Activated CD8-positive, alpha-beta T cell treated with anti-CD3 and anti-CD28 coated beads for 36 hours (primary cell): ENCODE measurements at regions of chr1 and their contacts with region 1.

Region 1: GRCh38 chr1:221777431-221778072 is 35.7 kb upstream of the DUSP10 start:
- DNase-seq: peak; percentile 82
- ATAC-seq: peak; percentile 67
- H3K4me3 Mint-ChIP-seq: peak overlapping the region; percentile 54
- H3K27ac Mint-ChIP-seq: peak overlapping the region; percentile 81
- H3K4me1 Mint-ChIP-seq: peaks cover 79% of the 10 kb centered on the region
- H3K27me3 Mint-ChIP-seq: no peaks in the 10 kb centered on the region
- CTCF ChIP-seq: peak; percentile 28

Region 2: DNA sequence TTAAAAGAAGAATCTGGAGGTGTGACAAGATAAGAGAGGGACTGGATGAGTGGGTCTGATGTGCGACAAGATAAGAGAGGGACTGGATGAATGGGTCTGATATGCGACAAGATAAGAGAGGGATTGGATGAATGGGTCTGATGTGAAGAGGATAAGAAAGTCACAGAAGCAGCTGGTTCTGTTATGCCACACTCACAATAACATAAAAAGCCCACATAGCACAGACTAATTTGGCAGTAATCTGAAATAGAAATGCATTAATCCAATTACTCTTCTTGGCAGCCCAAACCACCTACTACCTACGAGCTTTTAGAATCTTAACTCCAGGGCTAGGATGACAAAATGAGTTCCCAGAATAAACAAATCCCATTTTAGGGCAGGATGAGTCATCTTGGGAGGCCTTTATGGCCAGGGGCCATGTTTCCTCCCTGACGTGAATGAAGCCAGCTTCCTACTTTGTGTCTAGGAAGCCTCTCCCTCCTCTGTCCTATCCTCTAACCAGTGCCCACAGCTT is 165.2 kb before region 1 on chr1:
- CTCF ChIA-PET with region 1: no interaction called
- POLR2A ChIA-PET with region 1: no interaction called
- intact Hi-C with region 1: no loop called
- DNase-seq: no peak
- ATAC-seq: no peak
- H3K4me3 Mint-ChIP-seq: no peak overlapping the region
- H3K27ac Mint-ChIP-seq: no peak overlapping the region
- H3K4me1 Mint-ChIP-seq: no peaks in the 10 kb centered on the region
- H3K27me3 Mint-ChIP-seq: no peaks in the 10 kb centered on the region
- CTCF ChIP-seq: no peak

Region 3: DNA sequence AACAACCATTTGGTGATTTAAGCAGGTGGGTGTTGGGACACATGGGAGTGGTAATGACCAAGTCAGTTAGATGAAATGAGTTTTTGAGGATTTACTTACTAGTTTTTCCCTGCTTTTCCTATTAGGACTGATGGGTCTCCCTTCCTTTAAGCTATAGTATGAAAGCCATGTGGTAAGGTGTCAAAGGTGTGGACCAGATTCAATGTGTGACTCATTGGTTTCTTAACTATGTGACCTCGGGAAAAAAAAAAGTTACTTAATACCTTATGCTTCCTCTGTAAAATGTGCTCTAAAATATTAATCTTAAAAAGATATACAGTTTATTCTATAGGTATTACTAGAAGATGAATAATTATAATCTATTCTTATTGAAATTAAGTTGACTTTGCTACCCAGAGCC is 129.4 kb before region 1 on chr1:
- CTCF ChIA-PET with region 1: no interaction called
- POLR2A ChIA-PET with region 1: no interaction called
- intact Hi-C with region 1: no loop called
- DNase-seq: no peak
- ATAC-seq: no peak
- H3K4me3 Mint-ChIP-seq: no peak overlapping the region
- H3K27ac Mint-ChIP-seq: no peak overlapping the region
- H3K4me1 Mint-ChIP-seq: peaks cover 2% of the 10 kb centered on the region
- H3K27me3 Mint-ChIP-seq: peaks cover 3% of the 10 kb centered on the region
- CTCF ChIP-seq: no peak

Region 4: DNA sequence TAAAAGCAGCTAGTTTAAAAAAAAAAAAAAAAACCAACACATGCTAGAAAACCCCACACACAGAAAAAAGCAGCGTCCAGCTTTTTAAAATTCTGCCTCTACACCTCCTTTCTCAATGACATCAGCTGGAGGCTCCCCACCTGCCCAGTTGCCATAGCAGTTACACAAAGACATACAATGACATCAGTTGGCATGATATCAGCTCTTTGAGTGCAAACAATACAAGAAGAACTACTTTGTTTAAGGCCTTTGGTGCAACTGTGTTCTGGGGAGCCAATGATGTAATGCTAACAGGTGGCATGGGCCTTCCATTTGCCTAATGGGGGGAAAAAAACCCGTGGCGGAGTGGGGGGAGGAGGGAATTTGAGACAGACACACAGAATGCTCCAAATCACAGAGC is 68.6 kb before region 1 on chr1:
- CTCF ChIA-PET with region 1: interaction called, 4 read pairs
- POLR2A ChIA-PET with region 1: interaction called, 6 read pairs
- intact Hi-C with region 1: loop called (anchors 2 kb)
- DNase-seq: peak; percentile 61
- ATAC-seq: no peak
- H3K4me3 Mint-ChIP-seq: no peak overlapping the region
- H3K27ac Mint-ChIP-seq: peak overlapping the region; percentile 90
- H3K4me1 Mint-ChIP-seq: peaks cover 63% of the 10 kb centered on the region
- H3K27me3 Mint-ChIP-seq: no peaks in the 10 kb centered on the region
- CTCF ChIP-seq: no peak

Region 5: GRCh38 chr1:221753828-221754188 is 23.7 kb before region 1 on chr1:
- CTCF ChIA-PET with region 1: interaction called, 7 read pairs
- POLR2A ChIA-PET with region 1: interaction called, 7 read pairs
- intact Hi-C with region 1: loop called (anchors 1 kb)
- DNase-seq: no peak
- ATAC-seq: peak; percentile 43
- H3K4me3 Mint-ChIP-seq: no peak overlapping the region
- H3K27ac Mint-ChIP-seq: peak overlapping the region; percentile 88
- H3K4me1 Mint-ChIP-seq: peaks cover 52% of the 10 kb centered on the region
- H3K27me3 Mint-ChIP-seq: peaks cover 3% of the 10 kb centered on the region
- CTCF ChIP-seq: no peak

Region 6: GRCh38 chr1:221794079-221794670 is 16.6 kb after region 1 on chr1:
- CTCF ChIA-PET with region 1: interaction called, 4 read pairs
- POLR2A ChIA-PET with region 1: interaction called, 12 read pairs
- intact Hi-C with region 1: loop called (anchors 2 kb)
- DNase-seq: peak; percentile 71
- ATAC-seq: peak; percentile 89
- H3K4me3 Mint-ChIP-seq: peak overlapping the region; percentile 18
- H3K27ac Mint-ChIP-seq: peak overlapping the region; percentile 88
- H3K4me1 Mint-ChIP-seq: peaks cover 45% of the 10 kb centered on the region
- H3K27me3 Mint-ChIP-seq: no peaks in the 10 kb centered on the region
- CTCF ChIP-seq: no peak

Region 7: DNA sequence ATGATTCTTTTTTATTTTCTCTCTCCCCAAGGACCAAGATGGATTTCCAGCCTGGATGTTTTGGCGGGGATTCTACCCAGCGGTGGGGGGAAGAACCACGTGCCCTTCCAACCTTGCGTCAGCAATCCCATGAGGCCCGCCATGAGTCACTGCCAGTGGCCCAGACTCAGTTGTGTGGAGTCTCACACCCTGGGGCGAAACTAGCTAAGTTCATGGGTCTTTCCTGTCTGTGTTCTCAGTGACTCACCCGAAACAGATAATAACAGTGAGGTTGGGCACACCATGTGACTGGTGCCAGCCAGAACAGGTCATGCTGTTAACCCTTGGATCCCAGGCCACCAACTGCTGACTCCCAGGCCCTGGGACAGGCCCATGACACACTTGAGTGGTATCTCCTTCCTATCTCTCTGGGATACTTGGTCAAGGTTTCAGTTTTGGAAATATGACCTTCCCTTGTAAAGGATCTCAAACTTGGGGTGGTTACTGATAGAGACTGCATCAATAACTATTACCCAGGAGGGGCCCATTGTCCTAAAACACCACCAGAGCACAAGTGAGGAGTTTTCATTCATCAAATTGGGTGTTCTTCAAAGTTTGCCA is 62.3 kb after region 1 on chr1:
- CTCF ChIA-PET with region 1: interaction called, 3 read pairs
- POLR2A ChIA-PET with region 1: interaction called, 3 read pairs
- intact Hi-C with region 1: loop called (anchors 2 kb)
- DNase-seq: peak; percentile 90
- ATAC-seq: peak; percentile 96
- H3K4me3 Mint-ChIP-seq: no peak overlapping the region
- H3K27ac Mint-ChIP-seq: peak overlapping the region; percentile 80
- H3K4me1 Mint-ChIP-seq: peaks cover 36% of the 10 kb centered on the region
- H3K27me3 Mint-ChIP-seq: peaks cover 9% of the 10 kb centered on the region
- CTCF ChIP-seq: no peak

Region 8: DNA sequence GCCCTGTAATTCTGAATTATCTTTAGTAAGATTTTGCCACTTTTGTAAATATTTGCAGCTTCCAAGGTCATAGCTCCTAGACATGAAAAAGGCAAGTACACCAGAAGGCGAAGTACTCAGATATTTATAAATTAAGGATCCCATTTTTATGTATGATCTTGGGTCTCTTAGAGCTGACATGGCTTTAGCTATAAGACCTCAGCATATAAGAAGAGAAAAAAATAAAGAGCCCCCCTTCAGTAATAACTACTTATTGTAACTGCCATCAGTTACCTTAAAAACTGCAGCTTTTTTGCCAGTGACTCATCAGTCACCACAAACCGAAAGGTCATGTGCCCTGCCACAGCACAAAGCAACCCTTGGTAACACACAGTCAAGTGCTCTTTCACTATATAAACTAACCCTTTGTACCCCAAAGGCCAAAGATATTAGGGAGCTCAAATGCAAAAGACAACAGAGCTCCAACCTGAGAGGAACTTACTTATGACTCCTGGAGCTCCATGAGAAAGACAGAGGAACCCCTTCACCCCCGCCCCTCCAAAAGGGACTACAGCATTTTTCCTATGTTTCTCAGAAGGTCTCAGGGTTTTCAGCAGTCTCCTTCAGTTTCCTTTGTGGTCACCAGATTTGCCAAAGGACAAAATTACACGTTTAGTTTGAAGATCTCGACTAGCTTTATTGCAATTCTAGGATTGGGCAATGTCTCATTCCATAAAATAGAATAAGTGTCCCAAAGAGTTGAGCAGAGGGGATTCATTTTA is 184.2 kb after region 1 on chr1:
- CTCF ChIA-PET with region 1: no interaction called
- POLR2A ChIA-PET with region 1: no interaction called
- intact Hi-C with region 1: loop called (anchors 5 kb)
- DNase-seq: peak; percentile 84
- ATAC-seq: peak; percentile 97
- H3K4me3 Mint-ChIP-seq: no peak overlapping the region
- H3K27ac Mint-ChIP-seq: peak overlapping the region; percentile 63
- H3K4me1 Mint-ChIP-seq: peaks cover 18% of the 10 kb centered on the region
- H3K27me3 Mint-ChIP-seq: no peaks in the 10 kb centered on the region
- CTCF ChIP-seq: no peak